GM10248 (cell line): ENCODE measurements at regions of chr10 and their contacts with region 1.

Region 1: GRCh38 chr10:73644015-73644743 is 2.9 kb upstream of the MYOZ1 start:
- DNase-seq: peak; percentile 74
- CTCF ChIP-seq: peak; percentile 90

Region 2: GRCh38 chr10:73485320-73485719 is 158.9 kb before region 1 on chr10:
- CTCF ChIA-PET with region 1: no interaction called
- POLR2A ChIA-PET with region 1: no interaction called
- DNase-seq: no peak
- CTCF ChIP-seq: no peak

Region 3: DNA sequence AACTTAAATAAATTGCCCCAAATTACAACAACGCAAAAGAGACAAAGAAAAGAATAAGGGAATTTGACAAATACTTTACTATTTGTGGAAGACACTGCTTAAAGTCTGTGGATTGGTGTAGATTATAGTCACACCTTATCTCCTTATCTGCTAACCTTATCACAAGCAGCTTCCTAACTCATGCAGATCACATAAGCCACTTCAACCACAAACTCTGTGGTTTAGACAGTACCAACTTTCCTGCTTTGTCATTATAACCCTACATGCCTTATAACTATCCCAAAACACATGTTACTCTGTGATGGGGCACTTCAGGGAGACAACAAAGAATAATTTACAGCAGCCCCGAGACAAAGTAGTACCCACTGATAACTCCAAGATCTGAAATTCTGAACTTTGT is 106.9 kb before region 1 on chr10:
- CTCF ChIA-PET with region 1: interaction called, 180 read pairs
- POLR2A ChIA-PET with region 1: no interaction called
- DNase-seq: no peak
- CTCF ChIP-seq: no peak

Region 4: DNA sequence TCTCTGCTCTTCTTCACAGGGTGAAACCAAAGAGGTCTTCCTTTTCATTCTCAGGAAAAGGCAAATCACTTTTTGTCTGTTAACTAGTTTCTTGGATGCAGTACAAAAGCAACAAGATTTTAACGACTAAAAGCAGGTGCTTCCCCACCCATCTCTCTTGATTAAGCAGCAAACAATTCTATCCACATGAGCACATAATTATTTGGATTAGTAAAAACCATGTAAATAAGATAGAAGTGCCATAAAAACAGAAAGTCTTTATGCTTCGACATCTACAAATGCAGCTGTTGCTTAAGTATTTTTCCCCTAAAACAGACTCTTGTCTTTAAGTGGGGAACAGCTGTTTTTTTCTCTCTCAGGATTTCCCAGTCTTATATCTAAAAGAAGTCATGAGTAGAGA is 90.4 kb before region 1 on chr10:
- CTCF ChIA-PET with region 1: interaction called, 15 read pairs
- POLR2A ChIA-PET with region 1: no interaction called
- DNase-seq: no peak
- CTCF ChIP-seq: no peak

Region 5: GRCh38 chr10:73625004-73625883 is 18.9 kb before region 1 on chr10:
- CTCF ChIA-PET with region 1: interaction called, 39 read pairs
- POLR2A ChIA-PET with region 1: interaction called, 7 read pairs
- DNase-seq: peak; percentile 25
- CTCF ChIP-seq: no peak

Region 6: GRCh38 chr10:73931767-73932619 is 287.8 kb after region 1 on chr10:
- CTCF ChIA-PET with region 1: no interaction called
- POLR2A ChIA-PET with region 1: no interaction called
- DNase-seq: peak; percentile 75
- CTCF ChIP-seq: no peak